Right ventricle myocardium superior (tissue), 1 donor: ENCODE measurements at regions of chr7 and their contacts with region 1.

Region 1: GRCh38 chr7:2863461-2864066 is 19.5 kb upstream of the GNA12 start:
- DNase-seq: peak; percentile 86
- ATAC-seq: peak; percentile 94

Region 2: DNA sequence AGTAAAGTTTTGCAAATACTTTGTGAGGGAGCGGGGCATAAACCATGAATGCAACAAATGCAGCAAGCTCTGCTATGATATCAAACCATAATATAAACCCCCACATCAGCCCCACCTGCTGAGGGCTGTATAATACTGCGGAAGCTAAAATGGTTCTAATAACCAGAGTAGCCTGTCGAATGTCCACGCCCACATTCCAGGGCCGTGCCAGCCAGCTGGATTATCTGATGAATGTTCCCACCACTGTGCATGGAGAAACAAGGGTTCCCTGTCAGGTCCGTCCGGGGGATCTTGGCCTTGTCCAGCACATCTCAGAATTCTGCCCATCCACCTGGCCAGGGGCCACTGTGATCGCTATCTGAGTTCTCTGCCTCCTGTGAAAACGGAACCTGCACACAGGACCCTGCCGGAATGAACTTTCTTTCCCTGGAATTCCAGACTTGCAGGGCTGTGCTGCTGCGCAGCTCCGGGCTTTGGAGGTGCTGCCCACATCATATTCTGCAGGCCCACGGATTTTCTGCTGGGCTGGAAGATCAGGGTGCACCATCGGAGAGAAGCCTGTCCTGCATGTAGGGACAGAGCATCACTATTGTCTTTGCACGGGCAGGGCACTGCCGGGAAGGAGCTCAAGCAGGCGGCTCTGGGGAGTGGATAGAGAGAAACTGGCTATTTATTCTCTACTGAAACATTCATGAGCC is 57.5 kb after region 1 on chr7:
- intact Hi-C with region 1: no loop called
- DNase-seq: no peak
- ATAC-seq: no peak

Region 3: GRCh38 chr7:3154912-3155494 is 291.4 kb after region 1 on chr7:
- intact Hi-C with region 1: loop called (anchors 10 kb)
- DNase-seq: no peak
- ATAC-seq: no peak

Region 4: DNA sequence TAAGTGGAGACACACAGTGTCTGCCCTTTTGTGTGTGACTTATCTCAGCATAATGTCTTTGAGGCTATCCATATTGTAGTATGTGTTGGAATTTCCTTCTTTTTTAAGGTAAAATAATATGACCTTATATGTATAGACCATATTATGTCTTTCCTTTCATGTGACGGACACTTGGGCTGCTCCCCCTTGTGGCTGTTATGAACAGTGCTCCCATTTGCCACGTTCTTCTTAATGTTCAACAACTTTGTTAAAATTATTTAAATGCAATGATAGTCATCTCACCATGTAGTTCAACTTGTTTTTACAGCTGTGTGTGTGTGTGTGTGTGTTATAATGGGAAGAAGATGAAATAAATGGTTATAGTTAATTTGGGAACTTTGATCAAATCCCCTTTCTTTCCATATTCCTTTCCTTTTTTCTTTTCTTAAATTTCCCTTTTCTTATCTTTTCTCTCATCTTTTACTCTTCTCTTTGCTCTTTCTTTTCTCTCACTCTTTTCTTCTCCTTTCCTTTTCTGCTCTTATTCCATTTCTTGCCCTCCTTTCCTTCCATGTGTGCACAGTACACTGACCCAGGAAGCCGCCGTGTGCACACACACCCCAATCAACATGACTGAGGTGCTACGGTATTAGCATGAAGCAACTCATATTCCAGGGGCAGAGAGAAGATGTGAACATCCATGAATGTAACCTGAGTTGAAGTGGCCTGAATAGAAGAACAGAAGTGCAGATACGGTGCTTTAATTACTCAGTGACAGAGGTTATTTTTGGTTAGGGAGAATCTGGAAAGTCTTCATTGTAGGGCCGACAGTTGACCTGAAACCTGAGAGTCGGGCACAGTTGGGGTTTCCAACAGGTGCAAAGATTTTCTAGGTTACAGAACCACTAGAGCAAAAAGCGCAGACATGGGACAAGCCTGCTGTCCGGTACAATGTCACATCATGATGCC is 1034.1 kb after region 1 on chr7:
- intact Hi-C with region 1: loop called (anchors 10 kb)
- DNase-seq: no peak
- ATAC-seq: peak; percentile 71